Activated CD8-positive, alpha-beta T cell treated with anti-CD3 and anti-CD28 coated beads for 36 hours (primary cell): ENCODE measurements at regions of chr3 and their contacts with region 1.

Region 1: DNA sequence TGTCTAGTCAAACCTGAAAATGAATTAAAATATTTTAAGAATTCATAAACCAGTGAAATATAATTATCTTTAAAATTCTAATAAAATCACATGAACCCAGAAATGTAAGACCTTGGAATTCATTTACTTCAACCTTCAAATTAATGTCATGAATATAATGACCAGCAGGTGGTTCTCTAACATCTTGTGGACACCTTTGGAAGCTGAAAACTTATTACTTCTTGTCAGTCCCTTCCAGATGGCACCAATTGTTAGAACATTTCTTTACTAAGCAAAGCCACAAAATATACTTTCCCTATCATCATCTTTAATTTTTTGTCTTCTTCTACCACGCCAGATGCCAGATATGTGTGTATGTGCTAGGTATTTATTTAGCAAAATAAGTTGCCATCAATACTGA is 240.0 kb downstream of the MBNL1 start:
- DNase-seq: no peak
- ATAC-seq: no peak
- H3K4me3 Mint-ChIP-seq: no peak overlapping the region
- H3K27ac Mint-ChIP-seq: no peak overlapping the region
- H3K4me1 Mint-ChIP-seq: peaks cover 8% of the 10 kb centered on the region
- H3K27me3 Mint-ChIP-seq: no peaks in the 10 kb centered on the region
- CTCF ChIP-seq: peak; percentile 33

Region 2: GRCh38 chr3:152524198-152525140 is 15.8 kb after region 1 on chr3:
- CTCF ChIA-PET with region 1: interaction called, 10 read pairs
- POLR2A ChIA-PET with region 1: no interaction called
- intact Hi-C with region 1: no loop called
- DNase-seq: peak; percentile 72
- ATAC-seq: peak; percentile 60
- H3K4me3 Mint-ChIP-seq: no peak overlapping the region
- H3K27ac Mint-ChIP-seq: no peak overlapping the region
- H3K4me1 Mint-ChIP-seq: no peaks in the 10 kb centered on the region
- H3K27me3 Mint-ChIP-seq: no peaks in the 10 kb centered on the region
- CTCF ChIP-seq: peak; percentile 88

Region 3: GRCh38 chr3:152574461-152575079 is 65.9 kb after region 1 on chr3:
- CTCF ChIA-PET with region 1: interaction called, 10 read pairs
- POLR2A ChIA-PET with region 1: no interaction called
- intact Hi-C with region 1: no loop called
- DNase-seq: peak; percentile 67
- ATAC-seq: no peak
- H3K4me3 Mint-ChIP-seq: no peak overlapping the region
- H3K27ac Mint-ChIP-seq: no peak overlapping the region
- H3K4me1 Mint-ChIP-seq: no peaks in the 10 kb centered on the region
- H3K27me3 Mint-ChIP-seq: peaks cover 6% of the 10 kb centered on the region
- CTCF ChIP-seq: peak; percentile 53